ENCODE measurements at regions of chr7 and their contacts with region 1.

Region 1: GRCh38 chr7:97104719-97105238 is 12.7 kb upstream of the SDHAF3 start:
- DNase-seq: peak; percentile 65
- ATAC-seq: peak; percentile 99
- H3K4me3 ChIP-seq: no peak overlapping the region; a peak in 1 of 6 replicates
- H3K27ac ChIP-seq: no peak overlapping the region
- H3K4me1 ChIP-seq: no peaks in the 10 kb centered on the region; the same call in 1 of the 2 replicates
- H3K27me3 ChIP-seq: peaks cover 0 to 3% of the 10 kb centered on the region in 2 experiments; a peak in 1 of 5 replicates
- CTCF ChIP-seq: peak; percentile 97
- EP300 ChIP-seq: no peak
- POLR2A ChIP-seq: no peak
- RAD21 ChIP-seq: peak; percentile 85

Region 2: DNA sequence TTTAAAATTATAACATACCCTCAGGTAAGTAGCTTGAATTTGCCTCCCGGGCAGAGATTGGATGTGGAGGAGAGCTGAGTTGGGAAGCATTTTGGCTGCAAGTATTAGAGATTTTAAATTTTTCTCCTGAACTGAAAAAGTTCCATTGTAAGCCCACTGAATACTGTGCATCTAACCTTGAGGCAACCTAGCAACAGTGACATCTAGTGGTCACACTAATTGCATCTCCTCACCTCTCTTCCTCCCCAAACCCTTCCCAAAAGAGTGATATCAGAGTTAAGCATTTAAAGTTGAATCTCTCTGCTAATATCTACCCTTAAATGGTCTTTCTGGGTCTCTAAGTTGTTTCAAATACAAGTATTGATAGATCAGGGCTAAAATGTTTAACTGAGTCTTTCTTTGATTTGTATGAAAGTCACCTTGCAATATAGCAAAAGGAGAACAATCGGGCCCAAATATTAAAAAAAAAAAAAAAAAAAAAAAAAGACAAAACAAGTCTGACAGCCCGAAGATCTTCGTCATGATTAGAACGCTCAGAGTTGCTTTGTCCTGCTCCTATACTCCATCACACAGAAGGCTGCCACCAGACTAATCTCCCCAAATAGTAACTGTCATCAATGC is 39.7 kb before region 1 on chr7:
- CTCF ChIA-PET with region 1: no interaction called
- POLR2A ChIA-PET with region 1: no interaction called
- in situ Hi-C with region 1: no loop called
- intact Hi-C with region 1: no loop called
- DNase-seq: peak; percentile 36
- ATAC-seq: peak; percentile 92
- H3K4me3 ChIP-seq: no peak overlapping the region
- H3K27ac ChIP-seq: no peak overlapping the region
- H3K4me1 ChIP-seq: no peaks in the 10 kb centered on the region
- H3K27me3 ChIP-seq: no peaks in the 10 kb centered on the region
- CTCF ChIP-seq: peak; percentile 74
- EP300 ChIP-seq: no peak
- POLR2A ChIP-seq: no peak
- RAD21 ChIP-seq: peak; percentile 35; the same call in 1 of the 2 replicates

Region 3: DNA sequence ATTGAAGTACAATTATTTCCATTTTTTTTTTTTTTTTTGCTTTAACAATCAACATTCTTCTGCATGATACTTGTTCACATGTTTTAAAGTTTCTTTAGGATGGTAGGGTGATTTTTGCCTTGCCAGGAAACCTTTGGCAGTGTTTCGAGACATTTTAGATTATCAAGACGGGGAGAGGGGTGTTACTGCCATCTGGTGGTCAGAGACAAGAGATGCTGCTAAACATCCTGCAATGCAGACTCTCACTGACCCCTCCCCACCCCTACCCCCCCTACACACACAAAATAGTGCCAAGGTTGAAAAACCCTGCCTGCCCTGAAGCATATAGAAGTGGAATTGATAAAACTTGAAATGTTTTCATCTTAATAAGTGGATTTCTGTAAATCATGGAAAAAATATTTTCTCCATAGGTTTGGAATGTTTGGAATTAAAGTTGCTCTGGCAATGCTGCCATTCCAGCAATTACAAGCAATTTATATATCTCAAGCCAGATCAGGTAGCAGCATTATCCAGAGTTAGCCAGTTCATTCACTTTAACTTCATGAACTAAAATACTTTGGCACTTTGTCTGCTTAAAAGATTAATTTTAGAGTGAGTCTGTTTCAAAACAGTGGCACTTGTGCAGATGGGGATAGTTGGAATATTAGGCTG is 74.8 kb after region 1 on chr7:
- CTCF ChIA-PET with region 1: interaction called, 47 read pairs
- POLR2A ChIA-PET with region 1: no interaction called
- in situ Hi-C with region 1: no loop called
- intact Hi-C with region 1: loop called (anchors 1 kb)
- DNase-seq: peak; percentile 70
- ATAC-seq: peak; percentile 76
- H3K4me3 ChIP-seq: no peak overlapping the region
- H3K27ac ChIP-seq: no peak overlapping the region
- H3K4me1 ChIP-seq: no peaks in the 10 kb centered on the region
- H3K27me3 ChIP-seq: no peaks in the 10 kb centered on the region
- CTCF ChIP-seq: peak; percentile 74
- EP300 ChIP-seq: no peak
- POLR2A ChIP-seq: no peak
- RAD21 ChIP-seq: no peak

Region 4: GRCh38 chr7:97418312-97418711 is 313.5 kb after region 1 on chr7:
- CTCF ChIA-PET with region 1: no interaction called
- POLR2A ChIA-PET with region 1: no interaction called
- in situ Hi-C with region 1: no loop called
- intact Hi-C with region 1: loop called (anchors 2 kb)
- DNase-seq: no peak
- ATAC-seq: no peak; the same call in 2 of the 3 replicates
- H3K4me3 ChIP-seq: no peak overlapping the region
- H3K27ac ChIP-seq: no peak overlapping the region
- H3K4me1 ChIP-seq: no peaks in the 10 kb centered on the region
- H3K27me3 ChIP-seq: no peaks in the 10 kb centered on the region
- CTCF ChIP-seq: 0 out of 2 replicates have a peak, but pooled peaks have one; percentile 8
- EP300 ChIP-seq: no peak
- POLR2A ChIP-seq: no peak
- RAD21 ChIP-seq: no peak

Region 5: DNA sequence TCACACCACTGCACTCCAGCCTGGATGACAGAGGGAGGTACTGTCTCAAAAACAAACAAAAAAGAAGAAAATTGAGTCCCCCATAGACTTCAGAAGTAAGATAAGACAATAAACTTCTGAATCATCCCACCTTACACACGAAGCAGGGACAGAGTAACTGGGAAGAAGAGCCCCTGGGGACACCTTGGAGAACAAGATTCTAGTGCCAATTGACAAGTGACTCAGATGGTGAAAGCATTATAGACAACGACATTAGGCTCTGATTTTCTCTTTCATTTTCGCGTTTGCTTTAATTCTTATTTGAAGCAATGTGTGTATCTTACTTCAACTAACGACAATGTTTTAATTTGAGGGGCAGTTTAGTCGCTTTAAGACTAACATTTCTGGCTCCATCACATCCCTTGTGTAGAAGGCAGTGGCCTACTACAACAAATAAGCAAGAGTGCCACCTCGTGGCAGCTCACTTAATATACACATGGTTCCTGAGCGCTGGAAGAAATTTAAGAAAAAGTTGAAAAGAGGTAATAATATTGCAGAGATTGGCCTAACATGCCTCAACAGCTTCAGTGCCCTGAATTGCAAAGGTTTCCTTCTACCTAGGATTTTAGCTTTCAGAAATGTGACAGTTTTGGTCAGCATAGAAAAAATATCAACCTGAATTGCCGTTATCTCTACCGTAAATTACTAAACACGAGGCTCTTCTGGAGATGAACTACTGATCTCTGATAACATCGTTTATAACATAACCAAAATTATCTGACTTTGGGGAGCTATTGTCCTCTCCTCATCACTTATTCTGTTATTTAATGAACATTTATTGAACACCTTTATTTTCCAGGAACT is 730.7 kb after region 1 on chr7:
- CTCF ChIA-PET with region 1: interaction called, 27 read pairs
- POLR2A ChIA-PET with region 1: no interaction called
- in situ Hi-C with region 1: no loop called
- intact Hi-C with region 1: loop called (anchors 2 kb)
- DNase-seq: peak; percentile 53
- ATAC-seq: peak; percentile 88
- H3K4me3 ChIP-seq: no peak overlapping the region
- H3K27ac ChIP-seq: no peak overlapping the region
- H3K4me1 ChIP-seq: no peaks in the 10 kb centered on the region
- H3K27me3 ChIP-seq: no peaks in the 10 kb centered on the region; a peak in 2 of 5 replicates
- CTCF ChIP-seq: peak; percentile 77
- EP300 ChIP-seq: no peak
- POLR2A ChIP-seq: no peak
- RAD21 ChIP-seq: peak; percentile 16; the same call in 1 of the 2 replicates

Region 6: DNA sequence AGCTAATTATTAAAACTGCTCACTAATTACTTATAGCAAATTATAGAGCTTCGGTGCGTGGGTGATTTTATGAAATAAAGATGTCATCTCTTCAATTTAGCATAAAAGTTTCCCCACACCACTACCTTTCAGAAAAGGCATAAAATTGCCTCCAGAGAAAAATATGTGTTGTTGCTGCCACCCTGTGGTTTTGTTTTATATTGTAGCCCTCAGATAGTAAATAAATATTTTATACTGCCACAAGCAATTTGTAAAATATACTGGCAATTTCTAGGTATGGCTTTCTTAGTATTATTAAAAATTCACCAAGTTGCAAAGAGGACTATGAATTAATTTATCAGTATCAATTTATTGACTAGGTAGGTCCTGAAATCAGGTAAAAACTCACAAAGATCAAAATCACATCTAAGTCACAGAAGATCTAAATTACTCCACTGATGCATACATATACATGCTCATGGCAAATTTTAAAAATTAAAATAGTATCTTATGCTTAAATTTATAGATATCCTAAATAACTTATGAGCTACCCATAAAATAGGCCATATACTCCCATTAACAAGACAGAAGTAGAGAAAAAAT is 740.9 kb after region 1 on chr7:
- CTCF ChIA-PET with region 1: interaction called, 8 read pairs
- POLR2A ChIA-PET with region 1: no interaction called
- in situ Hi-C with region 1: no loop called
- intact Hi-C with region 1: loop called (anchors 2 kb)
- DNase-seq: peak; percentile 9
- ATAC-seq: no peak
- H3K4me3 ChIP-seq: no peak overlapping the region
- H3K27ac ChIP-seq: no peak overlapping the region
- H3K4me1 ChIP-seq: peaks cover 7% of the 10 kb centered on the region; the same call in 1 of the 2 replicates
- H3K27me3 ChIP-seq: no peaks in the 10 kb centered on the region
- CTCF ChIP-seq: peak; percentile 37; the same call in 1 of the 2 replicates
- EP300 ChIP-seq: no peak
- POLR2A ChIP-seq: no peak
- RAD21 ChIP-seq: no peak